ENCODE measurements at regions of chr3 and their contacts with region 1.

Region 1: DNA sequence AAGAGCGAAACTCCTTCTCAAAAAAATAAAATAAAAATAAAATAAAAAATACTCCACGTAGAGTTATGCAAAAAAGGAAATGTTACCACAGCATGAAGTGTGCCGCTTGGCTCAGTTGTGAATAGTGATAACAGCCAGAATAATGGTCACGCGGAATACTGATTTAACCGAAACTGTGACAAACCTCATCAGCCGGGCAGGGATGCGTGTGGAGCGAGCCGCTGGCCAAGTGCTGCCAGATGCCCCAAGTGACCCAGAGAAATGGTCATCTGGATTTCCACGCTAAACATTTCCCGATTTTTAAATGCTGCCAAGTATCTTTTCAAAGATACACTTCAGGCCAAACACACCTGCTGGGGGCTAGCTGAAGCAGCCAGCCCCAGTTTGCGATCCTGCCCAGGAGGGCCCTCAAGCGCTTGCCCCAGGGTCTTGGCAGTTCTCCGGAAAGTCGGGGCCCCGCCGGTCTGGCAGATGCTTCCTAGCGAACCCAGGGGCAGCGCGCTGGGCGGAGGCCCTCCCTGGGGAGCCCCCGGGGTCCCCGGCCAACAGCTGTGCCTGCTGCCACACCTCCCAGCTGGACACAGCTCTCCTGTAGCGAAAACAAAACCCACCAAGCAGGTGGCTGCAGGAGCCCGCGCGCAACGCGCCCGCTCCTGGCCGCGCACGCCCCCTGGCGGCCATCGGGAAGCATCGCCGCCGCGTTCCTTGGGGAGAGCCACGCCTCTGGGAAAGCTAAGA is 35.1 kb downstream of the CMTM6 start:
- DNase-seq: peak; percentile 87
- ATAC-seq: peak; percentile 54
- H3K4me3 ChIP-seq: no peak overlapping the region
- H3K27ac ChIP-seq: no peak overlapping the region
- H3K4me1 ChIP-seq: peaks cover 33% of the 10 kb centered on the region
- H3K27me3 ChIP-seq: no peaks in the 10 kb centered on the region
- CTCF ChIP-seq: peak; percentile 96

Region 2: DNA sequence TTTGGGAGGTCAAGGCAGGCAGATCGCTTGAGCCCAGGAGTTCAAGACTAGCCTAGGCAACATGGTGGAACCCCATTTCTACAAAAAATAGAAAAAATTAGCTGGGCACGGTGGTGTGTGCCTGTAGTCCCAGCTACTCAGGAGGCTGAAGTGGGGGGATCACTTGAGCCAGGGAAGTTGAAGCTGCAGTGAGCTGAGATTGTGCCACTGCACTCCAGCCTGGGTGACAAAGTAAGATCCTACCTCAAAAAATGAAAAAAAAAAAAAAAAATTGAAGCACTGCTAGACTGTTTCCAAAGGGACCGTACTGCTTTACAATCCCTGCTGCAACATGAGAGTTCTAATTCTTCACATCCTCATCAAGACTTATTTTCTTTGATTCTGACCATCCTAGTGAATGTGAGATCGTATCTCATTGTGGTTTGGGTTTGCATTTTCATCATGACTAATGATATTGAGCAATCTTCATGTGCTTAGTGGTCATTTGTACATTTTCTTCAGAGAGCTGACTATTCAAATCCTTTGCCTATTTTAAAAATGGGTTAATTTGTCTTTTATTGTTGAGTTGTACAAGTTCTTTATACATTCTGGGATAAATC is 218.2 kb before region 1 on chr3:
- CTCF ChIA-PET with region 1: no interaction called
- POLR2A ChIA-PET with region 1: no interaction called
- intact Hi-C with region 1: no loop called
- DNase-seq: peak; percentile 93
- ATAC-seq: peak; percentile 76
- H3K4me3 ChIP-seq: no peak overlapping the region
- H3K27ac ChIP-seq: peak overlapping the region; percentile 84
- H3K4me1 ChIP-seq: peaks cover 34% of the 10 kb centered on the region
- H3K27me3 ChIP-seq: no peaks in the 10 kb centered on the region
- CTCF ChIP-seq: no peak

Region 3: GRCh38 chr3:32296256-32297204 is 171.0 kb before region 1 on chr3:
- CTCF ChIA-PET with region 1: no interaction called
- POLR2A ChIA-PET with region 1: no interaction called
- intact Hi-C with region 1: loop called (anchors 5 kb)
- DNase-seq: peak; percentile 73
- ATAC-seq: peak; percentile 94
- H3K4me3 ChIP-seq: no peak overlapping the region
- H3K27ac ChIP-seq: no peak overlapping the region
- H3K4me1 ChIP-seq: 0 out of 2 replicates have a peak, but pooled peaks cover 2% of the 10 kb centered on the region
- H3K27me3 ChIP-seq: no peaks in the 10 kb centered on the region
- CTCF ChIP-seq: peak; percentile 93

Region 4: GRCh38 chr3:32401556-32402081 is 65.9 kb before region 1 on chr3:
- CTCF ChIA-PET with region 1: interaction called, 4 read pairs
- POLR2A ChIA-PET with region 1: no interaction called
- intact Hi-C with region 1: loop called (anchors 1 kb)
- DNase-seq: peak; percentile 87
- ATAC-seq: peak; percentile 82
- H3K4me3 ChIP-seq: peak overlapping the region; percentile 61
- H3K27ac ChIP-seq: peak overlapping the region; percentile 90
- H3K4me1 ChIP-seq: peaks cover 23% of the 10 kb centered on the region
- H3K27me3 ChIP-seq: no peaks in the 10 kb centered on the region
- CTCF ChIP-seq: 0 out of 2 replicates have a peak, but pooled peaks have one; percentile 8

Region 5: GRCh38 chr3:32443478-32443877 is 24.0 kb before region 1 on chr3:
- CTCF ChIA-PET with region 1: no interaction called
- POLR2A ChIA-PET with region 1: no interaction called
- intact Hi-C with region 1: loop called (anchors 1 kb)
- DNase-seq: peak; percentile 81
- ATAC-seq: peak; percentile 91
- H3K4me3 ChIP-seq: no peak overlapping the region
- H3K27ac ChIP-seq: peak overlapping the region; percentile 58
- H3K4me1 ChIP-seq: peaks cover 14% of the 10 kb centered on the region
- H3K27me3 ChIP-seq: no peaks in the 10 kb centered on the region
- CTCF ChIP-seq: no peak

Region 6: GRCh38 chr3:32510075-32510724 is 42.7 kb after region 1 on chr3:
- CTCF ChIA-PET with region 1: no interaction called
- POLR2A ChIA-PET with region 1: no interaction called
- intact Hi-C with region 1: no loop called
- DNase-seq: peak; percentile 86
- ATAC-seq: peak; percentile 99
- H3K4me3 ChIP-seq: no peak overlapping the region
- H3K27ac ChIP-seq: no peak overlapping the region
- H3K4me1 ChIP-seq: no peaks in the 10 kb centered on the region
- H3K27me3 ChIP-seq: no peaks in the 10 kb centered on the region
- CTCF ChIP-seq: peak; percentile 94

Region 7: DNA sequence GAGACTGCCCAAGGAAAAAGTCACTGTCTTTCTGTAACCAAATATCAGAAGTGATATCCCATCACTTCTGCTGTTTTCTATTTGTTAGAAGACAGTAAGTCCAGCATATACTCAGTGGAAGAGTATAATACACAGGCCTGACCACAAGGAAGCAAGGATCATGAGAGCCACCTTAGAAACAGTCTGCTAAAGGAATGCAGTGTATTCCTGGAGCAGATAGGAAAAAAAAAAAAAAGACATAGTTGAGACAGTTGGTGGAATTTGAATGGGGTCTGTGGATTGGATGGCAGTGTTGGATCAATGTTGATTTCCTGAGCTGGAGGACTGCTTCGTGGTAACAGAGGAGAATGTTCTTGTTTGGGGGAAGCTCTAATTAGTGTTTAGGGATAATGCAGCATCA is 783.2 kb after region 1 on chr3:
- CTCF ChIA-PET with region 1: interaction called, 11 read pairs
- POLR2A ChIA-PET with region 1: no interaction called
- intact Hi-C with region 1: no loop called
- DNase-seq: no peak
- ATAC-seq: no peak
- H3K4me3 ChIP-seq: no peak overlapping the region
- H3K27ac ChIP-seq: no peak overlapping the region
- H3K4me1 ChIP-seq: no peaks in the 10 kb centered on the region
- H3K27me3 ChIP-seq: no peaks in the 10 kb centered on the region
- CTCF ChIP-seq: no peak